ENCODE measurements at regions of chr17 and their contacts with region 1.

Region 1: DNA sequence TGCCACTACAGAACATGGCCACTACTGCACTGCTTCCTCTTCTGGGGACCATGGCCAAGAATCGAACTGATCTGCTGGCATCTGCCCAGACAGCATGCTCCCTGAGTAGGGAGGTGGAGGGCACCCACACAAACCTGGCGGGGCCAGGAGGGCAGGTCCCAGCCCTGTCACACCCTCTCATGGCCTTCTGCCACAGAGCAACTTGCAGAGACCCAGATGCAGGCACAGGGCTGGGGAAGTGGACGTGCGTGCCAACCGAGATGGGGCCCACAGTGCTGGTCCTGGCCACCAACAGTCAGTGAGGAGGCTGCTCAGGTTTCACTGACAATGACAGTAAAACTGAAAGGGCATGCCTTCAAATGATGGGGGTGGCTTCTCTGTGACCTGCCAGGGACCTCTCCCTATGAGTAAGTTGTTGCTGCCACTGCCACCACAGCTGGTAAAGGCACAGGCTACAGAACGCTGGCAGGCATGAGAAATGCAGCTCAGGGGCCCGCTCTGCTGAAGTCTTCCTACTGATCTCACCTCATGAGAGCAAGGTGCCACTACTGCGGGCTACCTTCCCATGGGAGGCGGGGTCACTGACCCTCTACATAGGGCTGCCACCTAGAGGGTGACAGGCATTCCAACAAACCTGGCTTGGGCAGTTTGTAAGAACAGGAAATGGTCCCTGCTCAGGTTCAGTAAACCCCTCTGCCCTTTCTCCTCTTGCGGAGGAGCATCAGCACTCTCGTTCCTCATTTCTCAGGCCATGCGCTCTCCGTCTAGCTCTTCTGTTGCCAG is 15.5 kb downstream of the HIC1 start:
- DNase-seq: peak; percentile 88
- H3K4me3 Mint-ChIP-seq: peak overlapping the region; percentile 33
- H3K27ac Mint-ChIP-seq: peak overlapping the region; percentile 90
- H3K4me1 Mint-ChIP-seq: peaks cover 81% of the 10 kb centered on the region
- H3K27me3 Mint-ChIP-seq: no peaks in the 10 kb centered on the region

Region 2: DNA sequence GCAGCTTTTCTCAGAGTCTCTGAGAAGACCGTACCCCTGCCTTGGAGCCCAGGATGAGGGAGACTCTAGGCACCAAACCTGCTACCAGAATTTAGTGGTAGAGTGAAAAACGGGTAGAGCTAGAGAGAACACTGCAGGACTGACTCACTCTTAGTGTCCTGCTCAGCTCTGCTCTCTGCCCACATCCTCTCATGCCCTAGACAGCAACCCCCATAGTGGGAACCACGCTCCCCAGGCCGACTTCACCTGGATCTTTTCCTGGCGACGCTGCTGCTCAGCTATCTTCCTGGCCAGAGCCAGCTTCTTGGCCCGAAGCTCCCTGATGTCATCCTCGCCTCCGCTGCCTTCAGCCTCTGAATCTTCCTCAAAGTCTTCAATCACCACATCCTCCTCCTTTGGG is 11.1 kb after region 1 on chr17:
- CTCF ChIA-PET with region 1: interaction called, 40 read pairs
- POLR2A ChIA-PET with region 1: interaction called, 214 read pairs
- DNase-seq: no peak
- H3K4me3 Mint-ChIP-seq: no peak overlapping the region
- H3K27ac Mint-ChIP-seq: no peak overlapping the region
- H3K4me1 Mint-ChIP-seq: peaks cover 56% of the 10 kb centered on the region
- H3K27me3 Mint-ChIP-seq: no peaks in the 10 kb centered on the region

Region 3: GRCh38 chr17:2122641-2123302 is 52.3 kb after region 1 on chr17:
- CTCF ChIA-PET with region 1: no interaction called
- POLR2A ChIA-PET with region 1: no interaction called
- DNase-seq: no peak
- H3K4me3 Mint-ChIP-seq: no peak overlapping the region
- H3K27ac Mint-ChIP-seq: no peak overlapping the region
- H3K4me1 Mint-ChIP-seq: peaks cover 22% of the 10 kb centered on the region
- H3K27me3 Mint-ChIP-seq: no peaks in the 10 kb centered on the region